WTC11 (cell line): ENCODE measurements at regions of chr9 and their contacts with region 1.

Region 1: DNA sequence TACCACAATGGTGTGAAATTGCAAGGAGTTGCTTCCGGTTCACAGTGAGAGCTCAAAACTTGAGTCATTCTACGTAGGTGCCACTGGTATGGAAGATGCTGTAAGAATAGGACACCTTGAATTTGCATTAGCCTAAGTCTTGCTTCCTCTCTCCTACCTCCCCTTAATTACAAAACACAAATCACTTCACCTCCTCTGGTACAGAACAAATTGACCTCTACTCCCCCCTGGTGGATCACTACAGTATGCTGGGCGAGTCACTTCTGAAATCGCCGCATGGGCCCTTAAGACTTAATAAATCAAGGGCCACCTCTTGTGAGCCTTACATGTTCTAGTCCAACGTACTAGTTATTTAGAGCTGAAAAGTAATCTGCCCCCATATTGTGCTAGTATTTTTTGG is 145.3 kb upstream of the SMARCA2 start:
- DNase-seq: peak; percentile 66
- ATAC-seq: peak; percentile 91
- H3K4me3 Mint-ChIP-seq: no peak overlapping the region
- H3K27ac Mint-ChIP-seq: no peak overlapping the region
- H3K4me1 Mint-ChIP-seq: peaks cover 18% of the 10 kb centered on the region
- H3K27me3 Mint-ChIP-seq: no peaks in the 10 kb centered on the region
- CTCF ChIP-seq: peak; percentile 58; the same call in 1 of the 2 replicates

Region 2: GRCh38 chr9:1726993-1727759 is 142.7 kb before region 1 on chr9:
- CTCF ChIA-PET with region 1: interaction called, 11 read pairs
- POLR2A ChIA-PET with region 1: no interaction called
- DNase-seq: peak; percentile 22
- ATAC-seq: peak; percentile 84
- H3K4me3 Mint-ChIP-seq: no peak overlapping the region
- H3K27ac Mint-ChIP-seq: no peak overlapping the region
- H3K4me1 Mint-ChIP-seq: peaks cover 17% of the 10 kb centered on the region
- H3K27me3 Mint-ChIP-seq: peaks cover 3% of the 10 kb centered on the region
- CTCF ChIP-seq: no peak

Region 3: DNA sequence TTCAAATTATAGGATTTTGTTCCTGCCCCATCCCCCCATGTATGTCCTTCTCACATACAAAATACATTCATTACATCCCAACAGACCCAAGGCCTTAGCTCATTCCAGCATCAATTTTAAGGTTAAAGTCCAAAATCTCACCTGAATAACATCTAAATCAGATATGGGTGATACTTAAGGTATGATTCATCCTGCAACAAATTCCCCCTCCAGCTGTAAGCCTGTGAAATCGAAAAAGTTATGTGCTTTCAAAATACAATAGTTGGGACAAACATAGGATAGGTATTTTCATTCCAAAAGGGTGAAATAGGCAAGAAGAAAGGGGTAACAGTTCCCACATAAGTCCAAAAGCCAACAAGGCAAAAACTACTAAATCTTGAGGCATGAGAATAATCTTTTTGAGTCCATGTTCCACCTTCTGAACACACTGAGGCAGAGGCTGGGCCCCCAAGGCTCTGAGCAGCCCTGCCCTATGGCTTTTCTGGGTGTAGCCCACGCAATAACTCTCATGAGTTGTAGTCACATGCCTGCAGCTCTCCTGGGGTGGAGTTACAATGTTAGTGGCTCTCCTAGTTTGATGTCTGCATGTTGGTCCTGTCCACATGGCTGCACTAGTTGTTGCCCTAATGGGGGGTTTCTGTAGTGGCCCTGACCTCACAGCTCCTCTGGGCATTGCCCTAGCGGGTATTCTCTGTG is 98.6 kb before region 1 on chr9:
- CTCF ChIA-PET with region 1: no interaction called
- POLR2A ChIA-PET with region 1: no interaction called
- DNase-seq: no peak
- ATAC-seq: no peak
- H3K4me3 Mint-ChIP-seq: no peak overlapping the region
- H3K27ac Mint-ChIP-seq: no peak overlapping the region
- H3K4me1 Mint-ChIP-seq: peaks cover 26% of the 10 kb centered on the region
- H3K27me3 Mint-ChIP-seq: no peaks in the 10 kb centered on the region
- CTCF ChIP-seq: no peak